ENCODE measurements at regions of chr7 and their contacts with region 1.

Region 1: GRCh38 chr7:40232242-40232893 is 97.6 kb downstream of the SUGCT start:
- DNase-seq: peak; percentile 35
- ATAC-seq: peak; percentile 85
- H3K4me3 ChIP-seq: no peak overlapping the region
- H3K27ac ChIP-seq: no peak overlapping the region
- H3K4me1 ChIP-seq: no peaks in the 10 kb centered on the region
- H3K27me3 ChIP-seq: no peaks in the 10 kb centered on the region
- CTCF ChIP-seq: peak; percentile 72; the same call in 1 of the 2 replicates

Region 2: DNA sequence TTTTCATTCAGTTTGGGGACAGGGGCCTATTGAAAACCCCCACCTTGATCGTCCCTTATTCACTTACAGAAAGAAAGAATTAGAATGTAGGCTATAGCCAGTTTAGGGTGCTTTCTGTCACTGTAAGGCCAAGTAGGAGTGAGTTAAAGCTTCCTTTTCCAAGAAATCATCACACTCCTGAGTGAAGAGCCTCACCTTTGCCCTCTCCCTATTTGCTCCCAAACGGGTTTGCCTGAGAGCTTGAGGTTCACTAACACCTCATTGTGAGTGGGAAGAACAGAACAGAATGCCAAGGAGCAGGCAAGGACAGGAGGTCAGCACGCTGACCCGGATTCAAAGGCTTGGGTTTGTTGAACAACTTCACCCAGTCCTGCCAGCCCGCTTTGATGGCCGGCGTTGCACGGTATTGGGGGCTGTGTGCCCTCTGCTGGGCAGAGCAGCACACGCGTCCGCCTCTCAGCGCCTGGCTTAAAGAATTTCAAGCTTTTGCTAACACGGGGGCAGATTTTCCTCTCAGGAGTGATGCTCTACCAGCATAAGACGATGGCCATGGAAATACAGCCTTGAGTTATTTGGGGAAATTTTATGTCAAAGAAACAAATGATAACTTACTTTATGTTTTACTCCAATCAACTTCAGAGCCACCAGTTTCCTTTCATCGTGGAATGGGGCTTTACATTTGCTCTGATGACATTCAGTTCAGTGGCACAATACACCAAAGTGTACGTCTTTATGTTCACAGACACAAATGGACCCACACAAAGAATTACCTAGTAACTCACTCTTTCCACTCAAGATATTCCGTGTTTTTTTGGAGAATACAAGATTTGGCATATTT is 372.5 kb after region 1 on chr7:
- CTCF ChIA-PET with region 1: no interaction called
- POLR2A ChIA-PET with region 1: no interaction called
- in situ Hi-C with region 1: no loop called
- intact Hi-C with region 1: loop called (anchors 5 kb)
- DNase-seq: peak; percentile 12
- ATAC-seq: peak; percentile 94
- H3K4me3 ChIP-seq: no peak overlapping the region
- H3K27ac ChIP-seq: no peak overlapping the region
- H3K4me1 ChIP-seq: no peaks in the 10 kb centered on the region
- H3K27me3 ChIP-seq: no peaks in the 10 kb centered on the region
- CTCF ChIP-seq: peak; percentile 90

Region 3: DNA sequence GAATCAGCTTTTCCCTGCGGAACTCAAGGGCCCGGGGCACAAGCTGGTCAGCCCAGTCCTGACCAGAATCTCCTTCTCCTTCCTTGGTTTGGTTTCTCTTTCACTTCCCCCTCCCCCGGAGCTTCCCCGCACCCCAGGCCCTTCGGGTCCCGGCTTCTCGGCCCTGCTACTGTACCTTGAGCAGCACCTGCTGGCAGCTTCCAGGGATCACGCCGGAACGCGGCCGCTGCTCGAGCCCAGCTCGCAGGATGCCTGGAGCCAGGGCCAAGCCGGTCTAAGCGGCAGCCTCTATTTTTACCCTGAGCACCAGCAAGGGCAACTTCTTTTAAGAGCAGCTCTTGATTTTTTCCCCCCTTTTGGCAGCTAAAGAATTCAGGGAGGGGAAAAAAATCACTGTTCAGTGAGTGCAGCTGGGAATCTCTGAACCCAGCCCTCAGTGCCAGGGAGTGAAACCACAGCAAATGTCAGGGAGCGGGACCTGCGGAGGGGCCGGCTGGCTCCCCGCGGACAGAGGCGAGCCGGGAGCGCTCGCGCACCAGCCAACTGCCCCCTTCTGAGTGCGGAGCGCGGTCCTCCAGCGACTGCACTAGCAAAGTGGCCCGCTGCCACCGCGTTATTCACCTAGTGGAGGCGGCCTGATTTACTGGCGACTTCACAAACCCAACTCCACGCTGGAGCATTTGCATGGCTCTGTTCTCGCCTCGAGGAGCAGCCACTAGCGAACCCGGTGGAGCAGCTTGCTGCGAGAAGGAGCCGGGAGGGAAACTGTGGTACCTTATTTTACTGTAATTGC is 1472.9 kb after region 1 on chr7:
- CTCF ChIA-PET with region 1: interaction called, 6 read pairs
- POLR2A ChIA-PET with region 1: no interaction called
- in situ Hi-C with region 1: no loop called
- intact Hi-C with region 1: loop called (anchors 2 kb)
- DNase-seq: no peak
- ATAC-seq: peak; percentile 100
- H3K4me3 ChIP-seq: peak overlapping the region; percentile 47 to 70
- H3K27ac ChIP-seq: peak overlapping the region; percentile 68
- H3K4me1 ChIP-seq: no peaks in the 10 kb centered on the region
- H3K27me3 ChIP-seq: peaks cover 3% of the 10 kb centered on the region
- CTCF ChIP-seq: peak; percentile 99

Region 4: GRCh38 chr7:41731492-41732435 is 1499.4 kb after region 1 on chr7:
- CTCF ChIA-PET with region 1: no interaction called
- POLR2A ChIA-PET with region 1: no interaction called
- in situ Hi-C with region 1: no loop called
- intact Hi-C with region 1: loop called (anchors 10 kb)
- DNase-seq: no peak
- ATAC-seq: no peak
- H3K4me3 ChIP-seq: no peak overlapping the region
- H3K27ac ChIP-seq: no peak overlapping the region
- H3K4me1 ChIP-seq: no peaks in the 10 kb centered on the region
- H3K27me3 ChIP-seq: peaks cover 3% of the 10 kb centered on the region; the same call in 1 of the 2 replicates
- CTCF ChIP-seq: peak; percentile 53; the same call in 1 of the 2 replicates

Measured in Panc1 (cell line).